ENCODE measurements at regions of chr1 and their contacts with region 1.

Region 1: DNA sequence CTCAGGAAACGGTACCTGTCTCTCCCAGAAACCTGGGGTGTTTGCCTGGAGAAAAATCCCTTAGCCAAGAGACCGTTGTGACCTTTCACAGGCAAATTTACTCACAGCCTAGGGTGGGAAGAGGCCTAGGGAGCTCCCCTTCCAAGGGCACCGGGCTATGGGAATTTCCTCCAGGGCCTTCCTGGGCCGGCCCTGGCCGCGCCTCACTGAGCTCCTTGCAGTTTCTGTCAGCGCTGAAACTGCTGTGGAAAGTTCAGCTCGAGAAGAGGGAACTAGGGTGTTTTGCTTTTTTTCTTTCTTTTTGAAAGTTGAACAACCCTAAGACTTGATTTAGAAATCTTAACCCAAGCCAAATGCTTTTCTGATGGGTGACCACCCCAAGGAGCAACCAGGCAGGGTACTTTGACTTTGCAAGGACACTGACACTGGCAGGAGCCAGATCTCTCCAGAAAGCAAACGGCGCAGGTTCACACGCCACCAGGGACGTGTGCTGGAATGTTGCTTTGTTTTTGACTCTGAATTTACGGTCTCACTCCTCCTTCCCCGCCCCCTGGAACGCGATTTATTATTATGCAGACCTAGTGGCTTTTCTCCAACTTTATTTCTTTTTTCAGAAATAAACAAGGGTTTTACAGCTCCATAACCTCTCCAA is 229.6 kb upstream of the JUN start:
- DNase-seq: no peak
- H3K4me3 ChIP-seq: no peak overlapping the region
- H3K4me3 Mint-ChIP-seq: no peak overlapping the region
- H3K27ac ChIP-seq: no peak overlapping the region
- H3K27ac Mint-ChIP-seq: no peak overlapping the region
- H3K4me1 ChIP-seq: no peaks in the 10 kb centered on the region
- H3K4me1 Mint-ChIP-seq: peaks cover 0 to 10% (median 2%) of the 10 kb centered on the region in 4 donors
- H3K27me3 ChIP-seq: no peaks in the 10 kb centered on the region
- H3K27me3 Mint-ChIP-seq: peaks cover 0 to 1% of the 10 kb centered on the region in 2 donors

Region 2: GRCh38 chr1:58805716-58806571 is 207.5 kb before region 1 on chr1:
- CTCF ChIA-PET with region 1: no interaction called
- POLR2A ChIA-PET with region 1: no interaction called
- intact Hi-C with region 1: no loop called
- DNase-seq: no peak
- H3K4me3 ChIP-seq: no peak overlapping the region
- H3K4me3 Mint-ChIP-seq: no peak overlapping the region
- H3K27ac ChIP-seq: no peak overlapping the region
- H3K27ac Mint-ChIP-seq: peak overlapping the region in 3 of 7 donors; percentile 52 to 92 (median 60)
- H3K4me1 ChIP-seq: no peaks in the 10 kb centered on the region
- H3K4me1 Mint-ChIP-seq: peaks cover 5 to 13% (median 8%) of the 10 kb centered on the region in 4 donors
- H3K27me3 ChIP-seq: no peaks in the 10 kb centered on the region
- H3K27me3 Mint-ChIP-seq: no peaks in the 10 kb centered on the region

Region 3: GRCh38 chr1:58903514-58904298 is 109.7 kb before region 1 on chr1:
- CTCF ChIA-PET with region 1: no interaction called
- POLR2A ChIA-PET with region 1: no interaction called
- intact Hi-C with region 1: loop called (anchors 10 kb)
- DNase-seq: peak; percentile 49 to 69 (median 58)
- H3K4me3 ChIP-seq: peak overlapping the region; percentile 39 to 56
- H3K4me3 Mint-ChIP-seq: peak overlapping the region; percentile 74 to 83 (median 81)
- H3K27ac ChIP-seq: peak overlapping the region; percentile 29
- H3K27ac Mint-ChIP-seq: peak overlapping the region; percentile 16 to 90 (median 61)
- H3K4me1 ChIP-seq: peaks cover 13% of the 10 kb centered on the region
- H3K4me1 Mint-ChIP-seq: peaks cover 9 to 19% (median 13%) of the 10 kb centered on the region in 4 donors
- H3K27me3 ChIP-seq: no peaks in the 10 kb centered on the region
- H3K27me3 Mint-ChIP-seq: no peaks in the 10 kb centered on the region

Region 4: DNA sequence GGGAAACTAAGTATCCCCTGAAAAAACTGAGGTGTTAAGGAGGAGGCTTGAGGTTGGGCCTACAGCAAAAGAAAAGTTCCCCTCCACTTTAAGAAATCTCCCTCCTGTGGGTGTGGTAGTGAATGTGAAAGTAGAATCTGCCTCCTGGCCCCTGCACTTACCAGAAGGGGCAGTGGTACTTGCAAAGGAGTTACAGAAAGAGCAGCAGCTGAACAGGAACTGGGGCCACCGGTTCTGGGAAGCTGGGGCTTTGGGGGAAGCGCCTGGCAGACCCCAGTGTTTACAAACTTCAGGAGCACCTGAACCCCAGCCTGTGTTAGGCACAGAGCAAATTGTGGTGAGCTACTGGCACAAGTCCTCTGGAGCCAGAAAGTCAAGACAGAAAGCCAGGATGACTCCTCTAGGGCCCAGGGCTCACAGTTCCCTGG is 33.3 kb after region 1 on chr1:
- CTCF ChIA-PET with region 1: no interaction called
- POLR2A ChIA-PET with region 1: no interaction called
- intact Hi-C with region 1: no loop called
- DNase-seq: peak in 4 of 5 donors; percentile 36 to 50 (median 40)
- H3K4me3 ChIP-seq: no peak overlapping the region
- H3K4me3 Mint-ChIP-seq: peak overlapping the region in 7 of 8 donors; percentile 19 to 69 (median 51)
- H3K27ac ChIP-seq: no peak overlapping the region
- H3K27ac Mint-ChIP-seq: peak overlapping the region; percentile 13 to 89 (median 84)
- H3K4me1 ChIP-seq: peaks cover 38% of the 10 kb centered on the region
- H3K4me1 Mint-ChIP-seq: peaks cover 31 to 55% (median 40%) of the 10 kb centered on the region in 4 donors
- H3K27me3 ChIP-seq: no peaks in the 10 kb centered on the region
- H3K27me3 Mint-ChIP-seq: no peaks in the 10 kb centered on the region

Measured in CD4-positive, alpha-beta memory T cell (primary cell).